B cell (primary cell): ENCODE measurements at regions of chr2 and their contacts with region 1.

Region 1: DNA sequence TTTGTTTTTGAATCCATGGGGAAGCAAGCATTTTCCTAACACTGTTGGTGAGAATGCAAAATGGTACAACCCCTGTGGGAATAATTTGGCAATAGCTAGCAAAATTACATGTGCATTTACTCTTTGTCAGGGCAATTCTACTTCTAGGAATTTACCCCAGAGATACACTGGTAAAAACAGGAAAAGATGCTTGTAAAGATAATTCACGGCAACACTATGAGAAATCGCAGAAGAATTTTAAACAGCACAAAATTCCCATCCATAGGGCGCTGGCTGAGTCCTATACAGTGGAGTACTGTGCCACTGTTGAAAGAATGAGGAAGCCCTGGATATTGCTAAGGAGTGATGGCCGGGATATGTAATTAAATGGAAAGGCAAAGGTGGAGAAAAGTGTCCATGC is 75.8 kb downstream of the DGKD start:
- DNase-seq: no peak
- ATAC-seq: no peak
- H3K4me3 ChIP-seq: no peak overlapping the region
- H3K4me3 Mint-ChIP-seq: no peak overlapping the region
- H3K27ac ChIP-seq: peak overlapping the region in 1 of 2 donors; percentile 48
- H3K27ac Mint-ChIP-seq: no peak overlapping the region
- H3K4me1 ChIP-seq: peaks cover 13 to 17% of the 10 kb centered on the region in 2 donors
- H3K4me1 Mint-ChIP-seq: peaks cover 64% of the 10 kb centered on the region
- H3K27me3 ChIP-seq: no peaks in the 10 kb centered on the region
- H3K27me3 Mint-ChIP-seq: no peaks in the 10 kb centered on the region
- CTCF ChIP-seq: no peak

Region 2: DNA sequence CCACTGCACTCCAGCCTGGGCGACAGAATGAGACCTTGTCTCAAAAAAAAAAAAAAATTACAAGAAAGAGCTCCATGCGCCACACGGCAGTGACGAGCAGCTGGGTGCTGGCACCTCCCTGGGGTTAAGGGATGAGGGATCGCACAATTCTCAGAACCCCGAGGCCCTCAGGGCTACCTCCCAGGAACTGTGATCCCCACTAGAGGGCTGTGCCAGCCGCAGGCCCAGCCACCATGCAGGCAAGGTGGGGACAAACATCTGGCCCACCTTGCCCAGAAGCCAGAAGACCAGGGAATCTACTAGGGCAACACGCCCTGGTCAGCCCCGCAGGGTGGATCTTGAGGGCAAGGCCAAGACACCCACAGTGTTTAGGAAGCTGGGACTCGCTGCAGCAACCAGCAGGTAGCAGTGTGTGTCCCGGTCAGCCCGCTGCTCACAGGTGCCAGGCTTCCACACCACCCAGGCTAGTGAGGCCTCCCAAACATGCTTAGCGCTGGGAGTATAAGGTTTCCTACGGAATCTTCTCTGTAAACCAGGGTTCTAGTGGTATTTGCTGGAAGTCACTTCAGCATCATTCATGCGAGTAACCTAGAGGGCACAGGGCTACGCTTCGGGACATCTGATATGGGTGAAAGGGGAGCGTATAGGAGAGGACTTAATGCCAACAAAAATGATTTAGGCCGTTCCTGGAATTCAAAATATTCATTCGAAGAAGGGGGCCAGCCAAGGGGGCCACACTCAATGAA is 115.7 kb before region 1 on chr2:
- CTCF ChIA-PET with region 1: no interaction called
- POLR2A ChIA-PET with region 1: no interaction called
- intact Hi-C with region 1: no loop called
- DNase-seq: no peak
- ATAC-seq: no peak
- H3K4me3 ChIP-seq: no peak overlapping the region
- H3K4me3 Mint-ChIP-seq: no peak overlapping the region
- H3K27ac ChIP-seq: no peak overlapping the region
- H3K27ac Mint-ChIP-seq: no peak overlapping the region
- H3K4me1 ChIP-seq: peaks cover 22 to 43% of the 10 kb centered on the region in 2 donors
- H3K4me1 Mint-ChIP-seq: peaks cover 48% of the 10 kb centered on the region
- H3K27me3 ChIP-seq: no peaks in the 10 kb centered on the region
- H3K27me3 Mint-ChIP-seq: no peaks in the 10 kb centered on the region
- CTCF ChIP-seq: no peak

Region 3: DNA sequence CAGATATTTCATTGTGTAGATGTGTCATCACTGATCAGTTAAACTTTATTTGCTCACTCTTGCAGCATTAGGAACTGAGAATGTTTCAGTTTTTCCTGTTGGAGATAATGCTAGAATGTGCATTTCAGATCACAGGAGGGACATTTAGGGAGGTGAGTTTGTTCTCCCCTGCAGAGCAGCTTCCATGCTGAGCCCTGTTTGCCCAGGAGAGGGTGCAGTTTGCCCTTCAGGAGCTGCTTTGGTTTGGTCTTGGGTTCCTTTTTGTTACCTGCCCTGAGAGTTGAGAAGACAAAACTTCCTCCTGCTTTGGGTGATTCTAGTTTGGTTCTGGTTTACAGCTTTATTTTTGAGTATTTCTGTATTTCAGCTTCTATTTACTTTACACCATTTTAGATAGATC is 25.9 kb before region 1 on chr2:
- CTCF ChIA-PET with region 1: interaction called, 426 read pairs
- POLR2A ChIA-PET with region 1: no interaction called
- intact Hi-C with region 1: no loop called
- DNase-seq: peak; percentile 82
- ATAC-seq: peak; percentile 89
- H3K4me3 ChIP-seq: no peak overlapping the region
- H3K4me3 Mint-ChIP-seq: no peak overlapping the region
- H3K27ac ChIP-seq: peak overlapping the region in 1 of 2 donors; percentile 69
- H3K27ac Mint-ChIP-seq: peak overlapping the region; percentile 82
- H3K4me1 ChIP-seq: peaks cover 25 to 28% of the 10 kb centered on the region in 2 donors
- H3K4me1 Mint-ChIP-seq: peaks cover 46% of the 10 kb centered on the region
- H3K27me3 ChIP-seq: no peaks in the 10 kb centered on the region
- H3K27me3 Mint-ChIP-seq: no peaks in the 10 kb centered on the region
- CTCF ChIP-seq: peak; percentile 88